ENCODE measurements at regions of chr17 and their contacts with region 1.

Region 1: GRCh38 chr17:79252886-79253285 is 178.3 kb downstream of the ENGASE start:
- DNase-seq: no peak
- ATAC-seq: no peak
- H3K4me3 ChIP-seq: no peak overlapping the region
- H3K27ac ChIP-seq: no peak overlapping the region
- H3K4me1 ChIP-seq: no peaks in the 10 kb centered on the region
- H3K27me3 ChIP-seq: peaks cover 4 to 91% (median 85%) of the 10 kb centered on the region in 7 donors
- CTCF ChIP-seq: no peak

Region 2: DNA sequence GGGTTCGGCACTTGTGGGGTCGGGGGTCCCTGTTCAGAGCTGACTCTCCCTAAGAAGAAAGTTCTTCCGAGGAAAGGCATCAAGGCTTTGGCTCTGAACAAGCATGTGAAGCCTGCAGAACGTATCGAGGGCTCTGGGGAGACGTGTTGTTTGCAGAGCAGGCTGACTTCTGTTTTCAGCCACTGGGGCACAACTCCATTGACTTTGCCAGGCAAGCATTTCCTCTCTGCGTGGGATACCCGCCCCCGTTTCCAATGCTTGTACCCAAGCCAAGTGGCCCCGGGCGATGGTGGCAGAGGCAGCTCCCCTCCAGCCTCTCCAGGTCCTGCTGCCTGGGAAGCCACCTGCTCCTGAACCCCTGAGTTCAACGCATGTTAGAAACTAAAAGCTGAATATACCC is 102.3 kb after region 1 on chr17:
- intact Hi-C with region 1: loop called in 1 of 10 experiments (anchors 10 kb)
- DNase-seq: no peak
- ATAC-seq: no peak
- H3K4me3 ChIP-seq: no peak overlapping the region
- H3K27ac ChIP-seq: no peak overlapping the region
- H3K4me1 ChIP-seq: no peaks in the 10 kb centered on the region
- H3K27me3 ChIP-seq: peaks cover 4 to 95% (median 86%) of the 10 kb centered on the region in 7 donors
- CTCF ChIP-seq: no peak

Region 3: GRCh38 chr17:79482752-79483521 is 230.1 kb after region 1 on chr17:
- intact Hi-C with region 1: no loop called
- DNase-seq: no peak
- ATAC-seq: no peak
- H3K4me3 ChIP-seq: no peak overlapping the region
- H3K27ac ChIP-seq: no peak overlapping the region
- H3K4me1 ChIP-seq: no peaks in the 10 kb centered on the region
- H3K27me3 ChIP-seq: peaks cover 0 to 93% (median 87%) of the 10 kb centered on the region in 7 donors
- CTCF ChIP-seq: no peak